ENCODE measurements at regions of chr4 and their contacts with region 1.

Region 1: GRCh38 chr4:83252782-83253405 is 31.7 kb downstream of the COQ2 start:
- DNase-seq: peak; percentile 93
- H3K4me3 ChIP-seq: no peak overlapping the region
- H3K27ac ChIP-seq: peak overlapping the region; percentile 12
- H3K4me1 ChIP-seq: no peaks in the 10 kb centered on the region
- H3K27me3 ChIP-seq: no peaks in the 10 kb centered on the region
- CTCF ChIP-seq: peak; percentile 83

Region 2: GRCh38 chr4:83110223-83110945 is 142.5 kb before region 1 on chr4:
- intact Hi-C with region 1: loop called (anchors 5 kb)
- DNase-seq: peak; percentile 95
- H3K4me3 ChIP-seq: peak overlapping the region; percentile 72
- H3K27ac ChIP-seq: peak overlapping the region; percentile 90
- H3K4me1 ChIP-seq: no peaks in the 10 kb centered on the region
- H3K27me3 ChIP-seq: no peaks in the 10 kb centered on the region
- CTCF ChIP-seq: peak; percentile 41

Region 3: GRCh38 chr4:83201761-83202160 is 51.1 kb before region 1 on chr4:
- intact Hi-C with region 1: loop called (anchors 5 kb)
- DNase-seq: no peak
- H3K4me3 ChIP-seq: no peak overlapping the region
- H3K27ac ChIP-seq: no peak overlapping the region
- H3K4me1 ChIP-seq: no peaks in the 10 kb centered on the region
- H3K27me3 ChIP-seq: no peaks in the 10 kb centered on the region
- CTCF ChIP-seq: no peak